Thyroid gland (tissue), 4 donors: ENCODE measurements at regions of chr15 and their contacts with region 1.

Region 1: GRCh38 chr15:83207622-83208411 is at the start of gene HDGFL3:
- DNase-seq: peak; percentile 68 to 69
- H3K4me3 ChIP-seq: peak within 1 kb of the TSS; percentile 48 to 99 (median 96)
- H3K27ac ChIP-seq: peak within 1 kb of the TSS; percentile 90 to 96 (median 91)
- H3K4me1 ChIP-seq: peaks cover 12 to 26% of the 10 kb centered on the region in 2 donors
- H3K27me3 ChIP-seq: no peaks in the 10 kb centered on the region
- CTCF ChIP-seq: peak in 2 of 6 experiments; percentile 35 to 37
- POLR2A ChIP-seq: no peak
- total RNA-seq, gene HDGFL3: 26.8 to 53.2 (median 41.5) TPM

Region 2: GRCh38 chr15:83066734-83067637 is 140.8 kb before region 1 on chr15 and contains the start of gene BTBD1:
- intact Hi-C with region 1: loop called (anchors 10 kb)
- DNase-seq: peak; percentile 98
- H3K4me3 ChIP-seq: peak within 1 kb of the TSS; percentile 11 to 92 (median 82)
- H3K27ac ChIP-seq: peak within 1 kb of the TSS; percentile 90 to 97 (median 96)
- H3K4me1 ChIP-seq: peaks cover 33 to 35% of the 10 kb centered on the region in 2 donors
- H3K27me3 ChIP-seq: no peaks in the 10 kb centered on the region
- CTCF ChIP-seq: no peak
- POLR2A ChIP-seq: peak; percentile 76 to 91
- total RNA-seq, gene BTBD1: 84.7 to 99.3 (median 94.5) TPM

Region 3: DNA sequence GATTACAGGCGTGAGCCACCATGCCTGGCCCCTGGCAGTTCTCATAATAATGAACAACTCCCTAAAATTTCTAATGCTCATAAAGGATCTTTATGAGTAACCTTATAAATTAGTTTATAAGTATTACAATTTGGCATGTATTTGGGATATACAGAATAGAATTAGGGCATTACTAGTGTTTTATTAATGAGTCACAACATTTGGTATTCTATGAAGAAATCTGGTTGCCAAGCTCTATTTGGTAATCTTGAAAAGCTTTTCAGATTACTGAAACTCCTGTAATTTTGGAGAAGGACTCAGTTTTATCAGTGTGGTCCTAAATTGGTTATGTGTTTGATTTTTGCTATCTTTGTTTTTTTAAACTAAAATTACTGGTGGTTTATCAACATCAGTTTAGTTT is 54.5 kb before region 1 on chr15:
- intact Hi-C with region 1: no loop called
- DNase-seq: no peak
- H3K4me3 ChIP-seq: no peak overlapping the region
- H3K27ac ChIP-seq: no peak overlapping the region
- H3K4me1 ChIP-seq: no peaks in the 10 kb centered on the region
- H3K27me3 ChIP-seq: no peaks in the 10 kb centered on the region
- CTCF ChIP-seq: no peak
- POLR2A ChIP-seq: no peak